ENCODE measurements at regions of chr1 and their contacts with region 1.

Region 1: GRCh38 chr1:150925816-150926741 is at the start of gene SETDB1:
- DNase-seq: peak; percentile 99
- H3K4me3 Mint-ChIP-seq: peak within 1 kb of the TSS; percentile 98
- H3K27ac Mint-ChIP-seq: peak within 1 kb of the TSS; percentile 98
- H3K4me1 Mint-ChIP-seq: peaks cover 18% of the 10 kb centered on the region
- H3K27me3 Mint-ChIP-seq: no peaks in the 10 kb centered on the region
- CTCF ChIP-seq: no peak
- total RNA-seq, gene SETDB1: 67.4 and 69.4 TPM in 2 replicates

Region 2: GRCh38 chr1:150696590-150697524 is 229.2 kb before region 1 on chr1 and contains the start of gene GOLPH3L:
- CTCF ChIA-PET with region 1: no interaction called
- POLR2A ChIA-PET with region 1: interaction called, 9 read pairs
- intact Hi-C with region 1: loop called (anchors 2 kb)
- DNase-seq: peak; percentile 100
- H3K4me3 Mint-ChIP-seq: peak within 1 kb of the TSS; percentile 88
- H3K27ac Mint-ChIP-seq: peak within 1 kb of the TSS; percentile 95
- H3K4me1 Mint-ChIP-seq: peaks cover 25% of the 10 kb centered on the region
- H3K27me3 Mint-ChIP-seq: no peaks in the 10 kb centered on the region
- CTCF ChIP-seq: no peak
- total RNA-seq, gene GOLPH3L: 68.5 and 76.9 TPM in 2 replicates

Region 3: DNA sequence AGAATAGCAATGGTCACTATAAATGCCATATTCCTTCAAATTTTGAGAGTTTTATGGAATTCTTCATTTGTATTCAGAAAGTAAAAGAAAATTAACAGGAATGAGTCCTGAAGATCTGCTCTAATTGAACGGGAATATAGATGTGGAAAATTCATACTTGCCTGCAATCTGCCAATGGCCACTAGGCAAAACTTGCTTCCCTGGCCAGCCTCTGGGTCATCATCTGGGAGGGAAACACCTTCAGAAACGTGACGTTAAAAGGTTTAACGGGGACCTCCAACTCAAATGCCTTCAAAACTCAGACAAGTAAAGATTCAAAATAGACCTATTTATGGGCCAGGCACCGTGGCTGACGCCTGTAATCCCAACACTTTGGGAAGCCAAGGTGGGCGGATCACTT is 96.3 kb before region 1 on chr1:
- CTCF ChIA-PET with region 1: interaction called, 9 read pairs
- POLR2A ChIA-PET with region 1: interaction called, 3 read pairs
- intact Hi-C with region 1: loop called (anchors 2 kb)
- DNase-seq: no peak
- H3K4me3 Mint-ChIP-seq: no peak overlapping the region
- H3K27ac Mint-ChIP-seq: no peak overlapping the region
- H3K4me1 Mint-ChIP-seq: no peaks in the 10 kb centered on the region
- H3K27me3 Mint-ChIP-seq: no peaks in the 10 kb centered on the region
- CTCF ChIP-seq: peak; percentile 39

Region 4: DNA sequence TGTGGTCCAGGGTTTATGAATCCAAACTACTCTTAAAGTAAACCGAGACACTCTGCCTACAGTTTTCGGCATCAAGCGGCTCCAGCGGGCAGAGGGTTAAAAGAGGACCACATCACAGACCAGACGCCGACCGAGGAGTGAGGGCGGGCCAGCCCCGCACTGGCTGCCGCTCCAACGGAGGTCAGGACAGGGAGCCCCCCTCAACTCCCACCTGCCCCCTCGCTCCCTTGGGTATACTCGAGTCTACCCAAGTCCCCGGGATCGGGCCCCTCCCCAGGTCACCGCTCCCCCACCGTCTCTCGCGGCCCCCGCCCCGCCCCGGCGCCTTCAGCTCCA is 50.0 kb before region 1 on chr1:
- CTCF ChIA-PET with region 1: interaction called, 13 read pairs
- POLR2A ChIA-PET with region 1: interaction called, 36 read pairs
- intact Hi-C with region 1: loop called (anchors 1 kb)
- DNase-seq: peak; percentile 72
- H3K4me3 Mint-ChIP-seq: peak overlapping the region; percentile 76
- H3K27ac Mint-ChIP-seq: peak overlapping the region; percentile 82
- H3K4me1 Mint-ChIP-seq: peaks cover 20% of the 10 kb centered on the region
- H3K27me3 Mint-ChIP-seq: no peaks in the 10 kb centered on the region
- CTCF ChIP-seq: no peak

Region 5: GRCh38 chr1:150906341-150906740 is 19.7 kb before region 1 on chr1:
- CTCF ChIA-PET with region 1: interaction called, 11 read pairs
- POLR2A ChIA-PET with region 1: interaction called, 3 read pairs
- intact Hi-C with region 1: no loop called
- DNase-seq: no peak
- H3K4me3 Mint-ChIP-seq: no peak overlapping the region
- H3K27ac Mint-ChIP-seq: no peak overlapping the region
- H3K4me1 Mint-ChIP-seq: no peaks in the 10 kb centered on the region
- H3K27me3 Mint-ChIP-seq: no peaks in the 10 kb centered on the region
- CTCF ChIP-seq: no peak

Region 6: DNA sequence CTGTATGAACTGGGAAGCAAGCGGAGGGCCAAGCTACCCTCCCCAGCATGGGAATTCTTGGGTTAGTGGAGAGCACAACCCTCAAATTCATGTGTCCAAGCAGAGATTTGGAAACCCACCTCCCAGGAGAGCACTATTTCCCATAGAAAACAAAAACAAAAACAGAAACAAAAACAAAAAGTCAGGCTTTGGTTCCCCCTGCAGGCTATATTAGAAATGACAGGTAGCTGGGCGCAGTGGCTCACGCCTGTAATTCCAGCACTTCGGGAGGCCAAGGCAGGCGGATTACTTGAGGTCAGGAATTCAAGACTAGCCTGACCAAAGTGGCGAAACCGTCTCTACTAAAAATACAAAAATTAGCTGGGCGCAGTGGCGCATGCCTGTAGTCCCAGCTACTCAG is 69.8 kb after region 1 on chr1:
- CTCF ChIA-PET with region 1: interaction called, 17 read pairs
- POLR2A ChIA-PET with region 1: interaction called, 3 read pairs
- intact Hi-C with region 1: no loop called
- DNase-seq: peak; percentile 56
- H3K4me3 Mint-ChIP-seq: no peak overlapping the region
- H3K27ac Mint-ChIP-seq: no peak overlapping the region
- H3K4me1 Mint-ChIP-seq: peaks cover 5% of the 10 kb centered on the region
- H3K27me3 Mint-ChIP-seq: no peaks in the 10 kb centered on the region
- CTCF ChIP-seq: peak; percentile 96

Region 7: DNA sequence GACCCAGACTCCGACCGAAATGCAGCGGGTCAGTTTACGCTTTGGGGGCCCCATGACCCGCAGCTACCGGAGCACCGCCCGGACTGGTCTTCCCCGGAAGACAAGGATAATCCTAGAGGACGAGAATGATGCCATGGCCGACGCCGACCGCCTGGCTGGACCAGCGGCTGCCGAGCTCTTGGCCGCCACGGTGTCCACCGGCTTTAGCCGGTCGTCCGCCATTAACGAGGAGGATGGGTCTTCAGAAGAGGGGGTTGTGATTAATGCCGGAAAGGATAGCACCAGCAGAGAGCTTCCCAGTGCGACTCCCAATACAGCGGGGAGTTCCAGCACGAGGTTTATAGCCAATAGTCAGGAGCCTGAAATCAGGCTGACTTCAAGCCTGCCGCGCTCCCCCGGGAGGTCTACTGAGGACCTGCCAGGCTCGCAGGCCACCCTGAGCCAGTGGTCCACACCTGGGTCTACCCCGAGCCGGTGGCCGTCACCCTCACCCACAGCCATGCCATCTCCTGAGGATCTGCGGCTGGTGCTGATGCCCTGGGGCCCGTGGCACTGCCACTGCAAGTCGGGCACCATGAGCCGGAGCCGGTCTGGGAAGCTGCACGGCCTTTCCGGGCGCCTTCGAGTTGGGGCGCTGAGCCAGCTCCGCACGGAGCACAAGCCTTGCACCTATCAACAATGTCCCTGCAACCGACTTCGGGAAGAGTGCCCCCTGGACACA is 122.0 kb after region 1 on chr1:
- CTCF ChIA-PET with region 1: no interaction called
- POLR2A ChIA-PET with region 1: no interaction called
- intact Hi-C with region 1: no loop called
- DNase-seq: peak; percentile 79
- H3K4me3 Mint-ChIP-seq: peak overlapping the region; percentile 85
- H3K27ac Mint-ChIP-seq: peak overlapping the region; percentile 79
- H3K4me1 Mint-ChIP-seq: peaks cover 21% of the 10 kb centered on the region
- H3K27me3 Mint-ChIP-seq: no peaks in the 10 kb centered on the region
- CTCF ChIP-seq: peak; percentile 36